Naive thymus-derived CD4-positive, alpha-beta T cell (primary cell): ENCODE measurements at regions of chr11 and their contacts with region 1.

Region 1: GRCh38 chr11:47616726-47617416 is 22.7 kb upstream of the C1QTNF4 start:
- DNase-seq: no peak
- ATAC-seq: no peak
- H3K4me3 ChIP-seq: no peak overlapping the region
- H3K4me3 Mint-ChIP-seq: no peak overlapping the region
- H3K27ac ChIP-seq: no peak overlapping the region
- H3K27ac Mint-ChIP-seq: peak overlapping the region in 1 of 9 donors; percentile 46
- H3K4me1 ChIP-seq: no peaks in the 10 kb centered on the region
- H3K4me1 Mint-ChIP-seq: peaks cover 0 to under 1% (median 0%) of the 10 kb centered on the region in 7 donors
- H3K27me3 ChIP-seq: no peaks in the 10 kb centered on the region
- H3K27me3 Mint-ChIP-seq: no peaks in the 10 kb centered on the region

Region 2: DNA sequence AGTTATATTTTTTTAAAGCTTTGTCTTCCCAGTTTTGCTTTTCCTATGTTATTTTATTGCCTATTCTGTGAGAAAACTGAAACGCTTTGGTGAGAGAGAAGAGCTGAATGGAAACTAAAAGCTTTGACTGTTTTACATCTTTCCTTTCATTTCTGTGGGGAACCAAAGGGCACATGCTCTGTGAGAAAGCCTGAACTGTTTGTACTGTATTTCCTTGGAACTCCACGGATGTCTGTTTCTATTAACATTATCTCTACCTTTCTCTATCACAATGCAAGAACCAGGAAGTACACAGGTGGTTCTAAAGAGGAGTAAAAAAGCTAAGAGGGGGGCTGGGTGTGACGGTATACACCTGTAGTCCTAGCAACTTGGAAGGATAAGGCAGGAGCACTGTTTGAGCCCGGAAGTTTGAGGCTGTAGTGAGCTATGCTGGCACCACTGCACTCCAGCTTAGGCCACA is 107.8 kb before region 1 on chr11:
- CTCF ChIA-PET with region 1: no interaction called
- POLR2A ChIA-PET with region 1: no interaction called
- intact Hi-C with region 1: loop called in 1 of 2 experiments (anchors 10 kb)
- DNase-seq: peak in 4 of 9 donors; percentile 3 to 28 (median 22)
- ATAC-seq: peak; percentile 46
- H3K4me3 ChIP-seq: no peak overlapping the region
- H3K4me3 Mint-ChIP-seq: peak overlapping the region in 9 of 10 donors; percentile 18 to 67 (median 58)
- H3K27ac ChIP-seq: peak overlapping the region; percentile 33
- H3K27ac Mint-ChIP-seq: peak overlapping the region; percentile 63 to 87 (median 82)
- H3K4me1 ChIP-seq: peaks cover 14 to 37% of the 10 kb centered on the region in 2 donors
- H3K4me1 Mint-ChIP-seq: peaks cover 50 to 88% (median 76%) of the 10 kb centered on the region in 7 donors
- H3K27me3 ChIP-seq: no peaks in the 10 kb centered on the region
- H3K27me3 Mint-ChIP-seq: no peaks in the 10 kb centered on the region